Thyroid gland (tissue), 4 donors: ENCODE measurements at regions of chr4 and their contacts with region 1.

Region 1: DNA sequence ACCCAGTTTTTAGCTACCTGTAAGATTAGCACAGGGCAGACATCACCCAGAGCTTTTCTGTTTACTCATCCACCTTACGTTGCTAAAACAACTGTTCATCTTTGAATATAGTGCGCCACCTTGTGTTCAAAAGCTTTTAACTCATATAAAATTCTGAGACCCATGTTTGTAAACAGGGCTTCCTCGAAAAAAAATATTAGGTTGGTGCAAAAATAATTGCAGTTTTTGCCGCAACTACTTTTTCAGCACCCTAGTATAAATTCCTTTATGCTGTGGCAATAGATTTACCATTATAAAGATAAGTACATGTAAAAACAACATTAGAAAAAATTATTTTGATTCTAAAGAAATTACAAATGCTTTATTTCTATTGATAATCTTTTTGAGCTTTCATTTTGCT is 147.9 kb downstream of the LRBA start:
- DNase-seq: no peak
- H3K4me3 ChIP-seq: no peak overlapping the region
- H3K27ac ChIP-seq: no peak overlapping the region
- H3K4me1 ChIP-seq: no peaks in the 10 kb centered on the region
- H3K27me3 ChIP-seq: no peaks in the 10 kb centered on the region
- CTCF ChIP-seq: peak; percentile 37 to 76 (median 56)
- POLR2A ChIP-seq: no peak

Region 2: GRCh38 chr4:150297861-150298474 is 569.2 kb before region 1 on chr4:
- intact Hi-C with region 1: loop called (anchors 10 kb)
- DNase-seq: peak; percentile 59 to 65
- H3K4me3 ChIP-seq: no peak overlapping the region
- H3K27ac ChIP-seq: no peak overlapping the region
- H3K4me1 ChIP-seq: no peaks in the 10 kb centered on the region
- H3K27me3 ChIP-seq: no peaks in the 10 kb centered on the region
- CTCF ChIP-seq: peak in 3 of 6 experiments; percentile 63 to 75 (median 68)
- POLR2A ChIP-seq: no peak